SK-N-SH (cell line): ENCODE measurements at regions of chr19 and their contacts with region 1.

Region 1: DNA sequence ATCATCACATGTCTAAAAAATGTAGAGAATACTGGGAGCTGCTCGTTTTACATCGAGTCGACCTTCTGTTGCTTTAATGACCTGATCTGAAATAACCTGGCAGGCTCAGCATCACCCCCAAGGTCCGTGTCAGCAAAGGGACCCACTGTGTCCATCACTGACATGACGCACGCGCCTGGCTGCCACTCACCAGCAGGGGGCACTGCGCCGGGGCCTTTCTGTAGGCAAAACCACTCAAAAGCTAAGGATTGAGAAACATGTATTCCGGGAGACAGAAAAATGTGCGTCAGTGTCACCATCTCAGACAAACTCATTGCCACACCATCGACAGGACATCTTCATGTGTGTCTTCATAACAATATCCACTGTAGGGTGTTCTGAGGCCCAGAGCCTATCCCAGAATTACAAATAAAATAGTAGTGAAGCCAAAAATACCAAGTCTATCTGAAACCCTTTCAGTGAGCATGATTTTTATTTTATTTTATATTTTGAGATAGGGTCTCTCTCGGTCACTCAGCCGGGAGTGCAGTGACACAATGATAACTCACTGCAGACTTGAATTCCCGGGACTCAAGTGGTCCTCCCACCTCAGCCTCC is 130.3 kb upstream of the LSM14A start:
- DNase-seq: peak; percentile 71
- H3K4me3 ChIP-seq: no peak overlapping the region; a peak in 1 of 4 replicates
- H3K27ac ChIP-seq: no peak overlapping the region
- H3K4me1 ChIP-seq: no peaks in the 10 kb centered on the region
- H3K27me3 ChIP-seq: no peaks in the 10 kb centered on the region
- CTCF ChIP-seq: peak; percentile 85
- EP300 ChIP-seq: no peak
- RAD21 ChIP-seq: peak; percentile 58

Region 2: GRCh38 chr19:34023381-34023780 is 18.6 kb before region 1 on chr19:
- CTCF ChIA-PET with region 1: interaction called, 21 read pairs
- POLR2A ChIA-PET with region 1: no interaction called
- DNase-seq: no peak
- H3K4me3 ChIP-seq: no peak overlapping the region
- H3K27ac ChIP-seq: no peak overlapping the region
- H3K4me1 ChIP-seq: no peaks in the 10 kb centered on the region
- H3K27me3 ChIP-seq: no peaks in the 10 kb centered on the region
- CTCF ChIP-seq: no peak
- EP300 ChIP-seq: no peak
- RAD21 ChIP-seq: no peak

Region 3: GRCh38 chr19:34067861-34068271 is 25.8 kb after region 1 on chr19:
- CTCF ChIA-PET with region 1: interaction called, 25 read pairs
- POLR2A ChIA-PET with region 1: interaction called, 3 read pairs
- DNase-seq: no peak
- H3K4me3 ChIP-seq: no peak overlapping the region
- H3K27ac ChIP-seq: no peak overlapping the region
- H3K4me1 ChIP-seq: no peaks in the 10 kb centered on the region
- H3K27me3 ChIP-seq: no peaks in the 10 kb centered on the region; the same call in 1 of the 2 replicates
- CTCF ChIP-seq: no peak
- EP300 ChIP-seq: no peak
- RAD21 ChIP-seq: no peak

Region 4: DNA sequence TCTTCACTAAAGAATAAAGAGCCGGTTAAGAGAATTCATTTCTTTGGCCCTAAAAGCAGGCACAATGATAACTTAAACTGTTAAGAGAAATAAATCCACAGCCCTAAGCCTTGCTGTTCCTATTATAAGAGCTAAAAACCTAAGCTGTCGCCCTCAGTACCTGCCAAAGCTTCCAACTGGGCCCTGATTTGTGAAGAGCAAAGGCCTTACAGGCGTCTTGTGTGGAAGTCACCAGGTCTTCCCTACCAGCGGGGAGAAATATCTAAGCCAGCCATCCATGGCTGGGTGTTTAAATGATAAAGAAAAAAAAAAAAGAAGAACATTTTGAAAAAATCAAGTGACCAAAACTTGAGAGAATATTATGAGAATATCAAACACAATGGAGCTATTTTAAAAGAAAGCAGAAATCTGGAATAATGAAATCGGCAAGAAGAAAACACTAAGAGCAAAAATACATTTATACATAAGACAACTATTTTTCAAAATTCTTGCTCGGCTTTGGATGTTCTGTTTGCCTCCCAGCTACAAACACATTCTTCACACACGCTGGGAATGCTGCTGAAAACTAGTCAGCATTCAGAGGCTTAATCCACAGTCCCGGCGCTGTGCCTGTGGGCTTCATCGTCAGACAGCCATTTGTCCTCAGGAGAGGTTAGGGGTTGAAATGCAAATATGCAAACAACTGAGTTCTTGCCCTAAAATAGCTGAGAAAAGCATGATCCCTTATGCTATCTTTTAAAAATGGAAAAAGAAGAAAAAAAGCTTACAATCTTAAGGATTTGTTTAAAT is 40.5 kb after region 1 on chr19:
- CTCF ChIA-PET with region 1: interaction called, 12 read pairs
- POLR2A ChIA-PET with region 1: no interaction called
- DNase-seq: no peak
- H3K4me3 ChIP-seq: no peak overlapping the region
- H3K27ac ChIP-seq: no peak overlapping the region
- H3K4me1 ChIP-seq: no peaks in the 10 kb centered on the region
- H3K27me3 ChIP-seq: no peaks in the 10 kb centered on the region
- CTCF ChIP-seq: no peak
- EP300 ChIP-seq: no peak
- RAD21 ChIP-seq: no peak

Region 5: GRCh38 chr19:34088303-34088702 is 46.3 kb after region 1 on chr19:
- CTCF ChIA-PET with region 1: interaction called, 13 read pairs
- POLR2A ChIA-PET with region 1: no interaction called
- DNase-seq: no peak
- H3K4me3 ChIP-seq: no peak overlapping the region
- H3K27ac ChIP-seq: no peak overlapping the region
- H3K4me1 ChIP-seq: no peaks in the 10 kb centered on the region
- H3K27me3 ChIP-seq: no peaks in the 10 kb centered on the region
- CTCF ChIP-seq: no peak
- EP300 ChIP-seq: no peak
- RAD21 ChIP-seq: no peak

Region 6: DNA sequence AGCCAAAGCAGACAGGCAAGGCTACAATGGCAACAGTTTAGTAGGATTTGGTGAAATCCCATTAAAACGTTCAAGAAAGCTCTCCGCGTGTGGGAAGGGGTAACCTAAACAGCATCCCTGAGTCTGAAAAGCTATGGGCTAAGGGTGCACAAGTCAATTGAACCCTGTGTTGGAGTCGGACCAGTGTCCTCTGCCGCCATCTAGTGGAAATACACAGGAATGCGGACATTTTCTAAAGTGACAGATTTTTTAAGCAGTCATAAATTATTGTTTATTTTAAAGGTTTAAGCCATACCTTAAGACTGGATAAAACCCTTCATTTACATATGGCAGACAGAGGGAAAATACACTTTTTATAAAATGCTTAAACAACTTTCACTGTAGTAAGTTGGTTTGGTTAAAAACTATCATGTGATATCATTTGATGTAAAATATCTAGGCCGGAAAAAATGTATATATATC is 103.7 kb after region 1 on chr19:
- CTCF ChIA-PET with region 1: interaction called, 10 read pairs
- POLR2A ChIA-PET with region 1: no interaction called
- DNase-seq: peak; percentile 74
- H3K4me3 ChIP-seq: no peak overlapping the region
- H3K27ac ChIP-seq: no peak overlapping the region
- H3K4me1 ChIP-seq: no peaks in the 10 kb centered on the region; a peak in 1 of 4 replicates
- H3K27me3 ChIP-seq: no peaks in the 10 kb centered on the region
- CTCF ChIP-seq: peak; percentile 94
- EP300 ChIP-seq: no peak
- RAD21 ChIP-seq: peak; percentile 90

Region 7: DNA sequence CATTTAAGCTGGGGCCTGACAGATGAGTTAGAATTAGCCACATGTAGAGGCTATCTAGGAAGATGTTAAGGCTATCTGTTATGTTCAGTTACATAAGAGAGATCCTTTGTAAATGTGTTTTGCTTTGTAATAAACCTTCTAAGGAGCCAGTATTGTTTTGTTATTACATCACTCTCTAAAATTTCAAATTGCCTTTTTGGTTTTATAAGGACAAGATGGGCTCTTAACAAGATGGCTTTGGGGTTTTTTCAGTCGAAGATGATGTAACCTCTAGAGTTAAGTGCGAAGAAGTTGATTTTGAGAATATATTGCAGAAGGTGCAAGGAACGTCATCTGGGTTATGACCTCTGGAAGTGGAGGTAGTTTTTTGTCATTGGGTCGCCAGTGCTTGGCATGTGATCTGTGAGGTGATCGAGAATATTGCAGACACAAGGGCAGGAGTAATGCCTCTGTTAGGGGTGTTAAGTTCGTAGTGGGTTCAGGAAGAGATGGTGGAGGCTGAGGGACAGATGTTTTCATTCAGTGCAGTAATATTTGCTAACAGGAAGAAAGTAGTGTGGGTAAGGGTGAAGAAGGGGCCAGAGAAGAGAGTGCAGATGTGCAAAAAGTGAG is 143.0 kb after region 1 on chr19:
- CTCF ChIA-PET with region 1: no interaction called
- POLR2A ChIA-PET with region 1: no interaction called
- DNase-seq: no peak
- H3K4me3 ChIP-seq: no peak overlapping the region
- H3K27ac ChIP-seq: no peak overlapping the region; a peak in 1 of 4 replicates
- H3K4me1 ChIP-seq: peaks cover 4 to 26% of the 10 kb centered on the region in 2 experiments; a peak in 3 of 4 replicates
- H3K27me3 ChIP-seq: no peaks in the 10 kb centered on the region
- CTCF ChIP-seq: no peak
- EP300 ChIP-seq: no peak
- RAD21 ChIP-seq: no peak